A549 (cell line): ENCODE measurements at regions of chr15 and their contacts with region 1.

Region 1: GRCh38 chr15:98568382-98569017 is 79.8 kb upstream of the IGF1R start:
- DNase-seq: peak in 1 of 2 experiments; percentile 31
- ATAC-seq: peak in 1 of 2 experiments; percentile 74; a peak in 3 of 6 replicates
- H3K4me3 ChIP-seq: no peak overlapping the region
- H3K27ac ChIP-seq: no peak overlapping the region
- H3K4me1 ChIP-seq: no peaks in the 10 kb centered on the region
- CTCF ChIP-seq: peak; percentile 50
- EP300 ChIP-seq: no peak
- POLR2A ChIP-seq: no peak
- RAD21 ChIP-seq: 0 out of 5 replicates have a peak, but pooled peaks of 1 of the 2 experiments have one; percentile 18

Region 2: DNA sequence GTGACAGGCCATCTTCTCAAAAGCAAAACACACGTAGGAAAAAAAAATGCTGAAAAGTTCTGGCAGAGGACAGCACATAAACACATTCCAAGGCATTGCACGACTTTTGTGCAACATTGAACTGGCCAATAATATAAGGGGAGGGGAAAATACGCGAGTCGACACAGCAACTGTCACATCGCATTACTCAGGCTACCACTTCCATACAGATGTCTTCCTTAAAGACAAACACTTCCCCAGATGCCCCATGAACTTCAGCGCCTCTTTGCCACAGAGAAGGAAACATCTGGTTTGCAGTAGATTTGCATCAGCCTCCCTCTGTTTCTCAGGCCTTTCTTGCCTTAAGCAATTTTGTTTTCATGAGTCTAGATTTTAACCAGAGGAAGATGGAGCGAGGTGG is 64.5 kb before region 1 on chr15:
- CTCF ChIA-PET with region 1: no interaction called
- POLR2A ChIA-PET with region 1: no interaction called
- DNase-seq: no peak
- ATAC-seq: peak in 1 of 2 experiments; percentile 23; a peak in 1 of 6 replicates
- H3K4me3 ChIP-seq: no peak overlapping the region
- H3K27ac ChIP-seq: no peak overlapping the region
- H3K4me1 ChIP-seq: 0 out of 3 replicates have a peak, but pooled peaks cover 2% of the 10 kb centered on the region
- CTCF ChIP-seq: no peak
- EP300 ChIP-seq: no peak
- POLR2A ChIP-seq: no peak
- RAD21 ChIP-seq: no peak

Region 3: GRCh38 chr15:98554272-98555172 is 14.0 kb before region 1 on chr15:
- CTCF ChIA-PET with region 1: interaction called, 38 read pairs
- POLR2A ChIA-PET with region 1: no interaction called
- DNase-seq: no peak
- ATAC-seq: peak in 1 of 2 experiments; percentile 16; a peak in 2 of 6 replicates
- H3K4me3 ChIP-seq: no peak overlapping the region
- H3K27ac ChIP-seq: no peak overlapping the region
- H3K4me1 ChIP-seq: no peaks in the 10 kb centered on the region
- CTCF ChIP-seq: no peak
- EP300 ChIP-seq: no peak
- POLR2A ChIP-seq: no peak
- RAD21 ChIP-seq: no peak

Region 4: GRCh38 chr15:98581715-98582114 is 13.2 kb after region 1 on chr15:
- CTCF ChIA-PET with region 1: interaction called, 26 read pairs
- POLR2A ChIA-PET with region 1: no interaction called
- DNase-seq: no peak
- ATAC-seq: peak in 1 of 2 experiments; percentile 64; a peak in 3 of 6 replicates
- H3K4me3 ChIP-seq: no peak overlapping the region
- H3K27ac ChIP-seq: no peak overlapping the region
- H3K4me1 ChIP-seq: 0 out of 3 replicates have a peak, but pooled peaks cover 5% of the 10 kb centered on the region
- CTCF ChIP-seq: peak; percentile 25; the same call in 2 of the 3 replicates
- EP300 ChIP-seq: no peak
- POLR2A ChIP-seq: no peak
- RAD21 ChIP-seq: peak in 1 of 2 experiments; percentile 38; a peak in 2 of 5 replicates